Mammary epithelial cell (primary cell): ENCODE measurements at regions of chr3 and their contacts with region 1.

Region 1: DNA sequence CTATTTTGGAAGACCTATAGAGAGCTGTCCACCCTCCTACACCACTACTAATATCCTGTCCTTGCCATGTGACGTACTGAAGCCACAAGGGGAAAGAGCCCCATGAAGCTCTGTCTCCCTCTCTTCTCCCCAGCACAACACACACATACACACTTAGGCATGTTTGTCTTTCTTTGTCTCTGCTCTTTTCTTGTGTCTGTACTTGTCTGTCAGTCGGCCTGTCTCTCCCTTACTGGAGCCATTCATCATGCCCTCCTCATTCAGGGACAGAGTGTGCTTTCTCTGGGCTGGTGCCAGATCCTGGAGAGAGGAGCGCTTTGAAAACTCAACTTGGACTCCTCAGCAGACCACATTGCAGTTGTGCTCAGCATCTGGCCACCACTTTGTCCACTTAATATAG is 47.6 kb downstream of the PSMD6 start:
- DNase-seq: peak; percentile 88
- H3K4me3 ChIP-seq: no peak overlapping the region
- H3K27ac ChIP-seq: peak overlapping the region; percentile 88
- H3K4me1 ChIP-seq: peaks cover 69% of the 10 kb centered on the region
- H3K27me3 ChIP-seq: no peaks in the 10 kb centered on the region
- CTCF ChIP-seq: no peak

Region 2: DNA sequence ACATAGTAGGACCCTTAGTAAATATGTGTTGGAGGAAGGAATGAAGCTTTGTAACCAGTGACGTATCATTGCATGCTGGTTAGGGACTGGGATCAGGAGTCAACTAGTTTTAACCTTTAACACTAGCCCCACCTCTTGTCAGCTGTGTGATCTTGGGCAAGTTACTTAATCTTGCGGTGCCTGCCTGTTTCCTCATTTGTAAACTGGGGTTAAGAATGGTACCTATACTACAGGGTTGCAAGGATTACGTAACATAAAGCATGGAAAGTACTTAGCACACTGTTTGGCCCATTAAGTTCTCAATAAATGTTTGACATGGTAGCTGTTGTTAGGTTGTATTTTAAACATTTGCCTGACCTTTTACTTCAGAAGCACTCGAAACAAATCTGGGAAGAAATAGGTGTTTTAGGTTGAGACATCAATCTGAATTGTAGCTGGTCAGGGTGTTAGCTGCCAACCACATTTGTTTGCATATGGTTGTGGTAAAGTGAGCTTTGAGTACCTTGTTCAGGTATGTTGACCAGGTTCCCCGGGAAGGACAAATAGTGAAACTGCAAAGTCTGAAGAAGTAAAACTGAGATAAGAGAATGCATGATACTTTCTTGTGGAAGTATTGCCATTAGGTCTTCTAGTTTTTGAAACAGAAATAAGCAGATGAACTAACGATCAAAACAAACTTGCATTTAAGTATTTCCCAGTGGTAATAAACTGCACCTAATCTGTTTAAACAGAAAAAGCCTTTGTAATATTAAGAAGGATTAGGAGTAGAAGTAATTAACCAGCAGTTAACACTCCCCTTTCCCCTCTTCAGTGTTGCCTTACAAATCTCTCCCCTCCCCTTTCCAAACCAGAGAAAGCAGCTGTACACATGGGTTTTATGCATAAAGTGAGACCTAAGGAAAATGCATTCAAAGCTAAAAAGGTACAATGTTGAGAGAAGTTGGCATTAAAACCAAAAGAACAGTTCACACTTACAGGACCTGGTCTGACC is 37.8 kb before region 1 on chr3:
- CTCF ChIA-PET with region 1: interaction called, 12 read pairs
- dilution Hi-C with region 1: no loop called
- in situ Hi-C with region 1: no loop called
- intact Hi-C with region 1: no loop called
- DNase-seq: peak; percentile 84
- H3K4me3 ChIP-seq: no peak overlapping the region
- H3K27ac ChIP-seq: no peak overlapping the region
- H3K4me1 ChIP-seq: peaks cover 43% of the 10 kb centered on the region
- H3K27me3 ChIP-seq: no peaks in the 10 kb centered on the region
- CTCF ChIP-seq: no peak

Region 3: GRCh38 chr3:63961891-63962290 is 13.8 kb before region 1 on chr3:
- CTCF ChIA-PET with region 1: interaction called, 25 read pairs
- dilution Hi-C with region 1: no loop called
- in situ Hi-C with region 1: no loop called
- intact Hi-C with region 1: loop called (anchors 2 kb)
- DNase-seq: peak; percentile 71
- H3K4me3 ChIP-seq: no peak overlapping the region
- H3K27ac ChIP-seq: no peak overlapping the region
- H3K4me1 ChIP-seq: peaks cover 38% of the 10 kb centered on the region
- H3K27me3 ChIP-seq: no peaks in the 10 kb centered on the region
- CTCF ChIP-seq: peak; percentile 62 to 73

Region 4: DNA sequence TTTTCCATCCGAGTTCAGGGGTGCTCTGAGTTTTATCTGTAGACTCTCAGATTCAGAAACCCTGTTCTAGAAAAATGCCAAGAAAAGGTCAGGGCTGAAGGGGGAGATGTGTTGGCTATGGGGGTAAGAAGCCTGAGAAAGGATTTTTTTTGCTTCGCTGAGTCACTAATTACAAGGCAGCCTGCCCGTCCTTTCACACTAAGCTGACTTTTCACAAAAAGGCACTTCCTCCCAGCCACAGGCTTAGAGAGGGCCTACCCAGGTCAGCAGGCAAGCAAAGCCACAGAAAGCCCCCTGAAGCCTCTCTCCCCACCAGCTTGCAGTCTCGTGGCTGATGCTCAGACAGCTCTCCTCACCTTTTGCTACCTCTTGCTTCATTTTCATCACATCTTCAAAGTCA is 442.1 kb after region 1 on chr3:
- CTCF ChIA-PET with region 1: no interaction called
- dilution Hi-C with region 1: no loop called
- in situ Hi-C with region 1: no loop called
- intact Hi-C with region 1: no loop called
- DNase-seq: no peak
- H3K4me3 ChIP-seq: no peak overlapping the region
- H3K27ac ChIP-seq: no peak overlapping the region
- H3K4me1 ChIP-seq: peaks cover 6% of the 10 kb centered on the region
- H3K27me3 ChIP-seq: no peaks in the 10 kb centered on the region
- CTCF ChIP-seq: no peak